ENCODE measurements at regions of chr5 and their contacts with region 1.

Region 1: DNA sequence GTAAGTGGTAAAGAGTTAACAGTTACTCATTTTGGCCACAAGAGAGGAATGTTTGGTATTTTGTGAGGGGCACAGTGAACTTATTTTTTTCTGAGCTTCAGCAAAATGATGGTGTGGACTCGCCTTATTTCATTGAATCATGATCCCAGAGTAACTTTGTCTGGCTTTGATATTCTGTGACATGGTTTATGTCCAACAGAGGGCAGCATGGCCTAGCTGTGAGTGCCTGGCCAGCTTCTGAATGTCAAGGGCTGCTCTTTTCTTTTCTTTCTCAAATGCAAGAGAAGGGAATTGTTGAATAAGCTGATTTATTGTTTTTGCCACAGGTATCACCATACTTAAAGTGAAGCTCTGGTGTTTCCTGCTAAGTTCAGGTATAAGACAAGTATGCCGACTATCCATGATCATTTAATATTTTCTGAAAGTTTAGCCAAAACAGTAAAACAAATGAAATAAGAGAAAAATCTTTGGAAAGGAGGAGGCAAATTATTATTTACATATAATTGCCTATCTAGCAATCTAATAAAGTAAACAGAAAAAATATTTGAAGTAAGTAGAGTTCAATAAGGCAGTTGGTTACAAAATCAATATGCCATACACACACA is 31.7 kb downstream of the MRPL22 start:
- H3K4me3 ChIP-seq: no peak overlapping the region
- H3K27ac ChIP-seq: no peak overlapping the region
- H3K4me1 ChIP-seq: no peaks in the 10 kb centered on the region
- CTCF ChIP-seq: peak; percentile 52; the same call in 1 of the 2 replicates

Region 2: GRCh38 chr5:154995679-154996078 is 23.1 kb after region 1 on chr5:
- CTCF ChIA-PET with region 1: interaction called, 25 read pairs
- POLR2A ChIA-PET with region 1: no interaction called
- H3K4me3 ChIP-seq: no peak overlapping the region
- H3K27ac ChIP-seq: no peak overlapping the region
- H3K4me1 ChIP-seq: no peaks in the 10 kb centered on the region
- CTCF ChIP-seq: 0 out of 2 replicates have a peak, but pooled peaks have one; percentile 19

Region 3: DNA sequence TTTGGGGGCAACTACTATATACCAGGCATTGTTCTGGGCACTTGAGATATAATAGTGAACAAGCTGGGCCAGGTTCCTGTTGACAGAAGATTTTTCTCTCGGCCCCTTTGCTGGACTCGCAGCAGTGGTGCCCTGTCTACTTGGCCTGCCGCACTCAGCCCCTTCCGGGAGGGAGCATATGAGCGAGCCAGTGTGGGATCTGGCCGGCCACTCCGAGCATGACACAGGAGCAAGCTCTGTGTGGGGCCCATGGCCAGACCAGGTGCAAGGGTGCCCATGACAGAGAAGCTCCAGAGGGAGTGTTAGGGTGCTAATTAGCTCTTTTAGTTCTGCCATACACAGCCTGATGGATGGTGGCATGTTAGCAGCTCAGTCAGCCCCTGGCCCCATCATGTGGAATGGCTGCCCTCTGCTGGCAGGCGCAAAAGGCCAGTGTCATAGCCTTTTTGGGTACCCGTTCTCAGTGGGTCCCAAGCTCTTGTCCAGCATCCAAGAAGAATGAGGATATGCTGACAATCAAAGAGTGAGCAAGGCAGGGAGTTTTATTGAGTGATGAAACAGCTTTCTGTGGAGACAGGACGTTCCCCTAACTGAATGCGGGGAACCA is 31.7 kb after region 1 on chr5:
- CTCF ChIA-PET with region 1: interaction called, 10 read pairs
- POLR2A ChIA-PET with region 1: no interaction called
- H3K4me3 ChIP-seq: no peak overlapping the region
- H3K27ac ChIP-seq: no peak overlapping the region
- H3K4me1 ChIP-seq: no peaks in the 10 kb centered on the region
- CTCF ChIP-seq: no peak

Region 4: DNA sequence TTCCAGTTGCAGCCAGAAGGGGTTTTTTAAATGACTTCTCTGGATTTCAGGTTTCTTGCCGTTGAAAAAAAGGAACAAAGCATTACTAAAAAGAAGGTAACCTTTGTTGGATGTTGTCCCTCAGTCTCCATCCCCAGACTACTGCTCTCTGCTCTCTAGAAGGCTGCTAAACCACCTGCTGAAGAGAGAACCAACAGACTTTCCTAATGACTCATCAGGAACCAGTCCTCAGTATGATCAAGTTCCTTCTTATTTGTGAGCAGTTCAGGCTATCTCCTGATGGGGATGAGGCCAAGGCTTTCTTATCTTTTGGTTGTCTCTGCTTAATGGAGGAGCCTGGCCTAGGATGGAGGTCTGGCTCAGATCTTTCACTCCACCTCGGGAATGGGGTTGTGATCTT is 45.0 kb after region 1 on chr5:
- CTCF ChIA-PET with region 1: no interaction called
- POLR2A ChIA-PET with region 1: no interaction called
- H3K4me3 ChIP-seq: no peak overlapping the region
- H3K27ac ChIP-seq: no peak overlapping the region
- H3K4me1 ChIP-seq: no peaks in the 10 kb centered on the region
- CTCF ChIP-seq: no peak

Measured in HEK293 (cell line).